Sciatic nerve (tissue), 2 donors: ENCODE measurements at regions of chr18 and their contacts with region 1.

Region 1: GRCh38 chr18:31840499-31840898 is 79.8 kb upstream of the SLC25A52 start:
- DNase-seq: no peak
- ATAC-seq: no peak

Region 2: GRCh38 chr18:31626409-31626808 is 214.1 kb before region 1 on chr18:
- intact Hi-C with region 1: no loop called
- DNase-seq: no peak
- ATAC-seq: no peak

Region 3: DNA sequence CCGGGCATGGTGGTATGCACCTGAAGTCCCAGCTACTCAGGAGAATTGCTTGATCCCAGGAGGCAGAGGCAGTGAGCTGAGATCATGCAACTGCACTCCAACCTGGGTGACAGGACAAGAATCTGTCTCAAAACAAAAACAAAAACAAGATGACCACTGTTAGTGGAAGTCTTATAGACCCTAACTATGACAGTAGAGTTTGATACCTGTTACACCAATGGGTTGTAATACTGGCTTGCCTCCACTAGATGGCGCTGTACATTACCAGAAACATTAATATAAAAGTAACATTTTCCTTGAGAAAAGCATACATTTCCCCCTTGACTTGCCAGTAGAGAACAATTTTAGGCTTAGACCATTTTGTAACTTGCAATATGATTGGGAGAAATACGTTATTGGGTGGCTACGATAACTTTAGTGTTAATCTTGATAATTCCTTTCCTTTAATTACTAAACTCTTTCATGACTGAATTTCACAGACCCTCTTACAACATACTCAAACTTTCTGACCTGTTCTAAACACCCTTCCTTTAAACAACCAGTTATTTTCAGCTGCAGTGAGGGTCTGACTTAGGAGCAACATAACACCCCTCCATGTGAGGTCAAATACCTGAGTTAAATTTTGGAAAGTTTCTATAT is 99.3 kb before region 1 on chr18:
- intact Hi-C with region 1: no loop called
- DNase-seq: peak; percentile 65
- ATAC-seq: peak; percentile 30

Region 4: GRCh38 chr18:31901063-31901462 is 60.6 kb after region 1 on chr18:
- intact Hi-C with region 1: no loop called
- DNase-seq: no peak
- ATAC-seq: no peak

Region 5: DNA sequence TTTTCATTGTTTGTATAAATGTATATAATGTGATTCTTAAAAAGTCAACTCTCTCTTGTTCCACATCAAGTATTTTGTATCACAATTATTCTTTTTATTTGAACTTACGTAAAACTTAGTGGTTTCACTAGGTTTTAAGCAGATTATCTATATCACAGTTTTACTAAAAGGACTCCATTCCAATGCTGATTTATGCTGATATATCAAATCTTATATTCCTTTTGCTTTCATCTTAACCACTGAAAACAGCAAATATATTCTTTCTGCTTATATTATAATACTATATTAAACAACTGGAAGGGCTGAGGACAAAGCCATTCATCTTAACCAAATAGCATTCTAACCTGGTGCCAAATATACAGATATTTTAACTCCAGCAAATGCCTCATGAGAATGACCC is 78.2 kb after region 1 on chr18:
- intact Hi-C with region 1: loop called (anchors 10 kb)
- DNase-seq: no peak
- ATAC-seq: no peak

Region 6: GRCh38 chr18:31965316-31965970 is 124.9 kb after region 1 on chr18:
- intact Hi-C with region 1: no loop called
- DNase-seq: no peak
- ATAC-seq: no peak